Panc1 (cell line): ENCODE measurements at regions of chr15 and their contacts with region 1.

Region 1: GRCh38 chr15:94670438-94671034 is 439.2 kb downstream of the MCTP2 start:
- DNase-seq: peak; percentile 7
- ATAC-seq: no peak
- H3K4me3 ChIP-seq: no peak overlapping the region
- H3K27ac ChIP-seq: no peak overlapping the region
- H3K4me1 ChIP-seq: 0 out of 2 replicates have a peak, but pooled peaks cover 5% of the 10 kb centered on the region
- H3K27me3 ChIP-seq: no peaks in the 10 kb centered on the region
- CTCF ChIP-seq: peak; percentile 73; the same call in 1 of the 2 replicates

Region 2: GRCh38 chr15:94412979-94413746 is 257.4 kb before region 1 on chr15:
- CTCF ChIA-PET with region 1: no interaction called
- POLR2A ChIA-PET with region 1: no interaction called
- in situ Hi-C with region 1: no loop called
- intact Hi-C with region 1: loop called (anchors 10 kb)
- DNase-seq: peak; percentile 10
- ATAC-seq: no peak
- H3K4me3 ChIP-seq: no peak overlapping the region
- H3K27ac ChIP-seq: no peak overlapping the region
- H3K4me1 ChIP-seq: no peaks in the 10 kb centered on the region
- H3K27me3 ChIP-seq: no peaks in the 10 kb centered on the region
- CTCF ChIP-seq: peak; percentile 65; the same call in 1 of the 2 replicates

Region 3: GRCh38 chr15:94785091-94785490 is 114.6 kb after region 1 on chr15:
- CTCF ChIA-PET with region 1: no interaction called
- POLR2A ChIA-PET with region 1: no interaction called
- in situ Hi-C with region 1: no loop called
- intact Hi-C with region 1: no loop called
- DNase-seq: no peak
- ATAC-seq: no peak
- H3K4me3 ChIP-seq: no peak overlapping the region
- H3K27ac ChIP-seq: no peak overlapping the region
- H3K4me1 ChIP-seq: no peaks in the 10 kb centered on the region
- H3K27me3 ChIP-seq: no peaks in the 10 kb centered on the region
- CTCF ChIP-seq: no peak

Region 4: DNA sequence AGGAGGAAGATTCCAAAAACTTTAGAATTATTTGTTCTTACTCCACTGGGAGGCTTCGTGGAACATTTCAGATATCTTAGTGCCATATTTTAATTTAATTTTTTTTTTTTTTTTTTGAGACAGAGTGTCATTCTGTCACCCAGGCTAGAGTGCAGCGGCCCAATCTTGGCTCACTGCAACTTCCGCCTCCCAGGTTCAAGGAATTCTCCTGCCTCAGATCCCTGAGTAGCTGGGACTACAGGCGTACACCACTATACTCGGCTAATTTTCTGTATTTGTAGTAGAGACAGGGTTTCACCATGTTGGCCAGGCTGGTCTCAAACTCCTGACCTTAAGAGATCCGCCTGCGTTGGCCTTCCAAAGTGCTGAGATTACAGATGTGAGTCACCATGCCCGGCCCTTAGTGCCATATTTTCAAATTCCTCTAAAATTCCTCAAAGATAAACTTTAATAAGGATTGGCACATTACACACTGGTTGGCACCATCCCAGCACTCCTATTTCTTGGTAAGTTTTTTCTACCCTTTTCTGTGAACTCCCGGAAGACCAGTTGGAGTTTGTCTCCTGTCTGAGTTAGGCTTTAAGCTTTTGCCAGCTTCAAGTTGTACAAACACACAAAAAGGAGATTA is 254.5 kb after region 1 on chr15:
- CTCF ChIA-PET with region 1: no interaction called
- POLR2A ChIA-PET with region 1: interaction called, 10 read pairs
- in situ Hi-C with region 1: no loop called
- intact Hi-C with region 1: no loop called
- DNase-seq: no peak
- ATAC-seq: no peak
- H3K4me3 ChIP-seq: no peak overlapping the region
- H3K27ac ChIP-seq: no peak overlapping the region
- H3K4me1 ChIP-seq: no peaks in the 10 kb centered on the region
- H3K27me3 ChIP-seq: no peaks in the 10 kb centered on the region
- CTCF ChIP-seq: no peak

Region 5: GRCh38 chr15:95025924-95026728 is 355.6 kb after region 1 on chr15:
- CTCF ChIA-PET with region 1: no interaction called
- POLR2A ChIA-PET with region 1: no interaction called
- in situ Hi-C with region 1: no loop called
- intact Hi-C with region 1: loop called (anchors 10 kb)
- DNase-seq: no peak
- ATAC-seq: peak; percentile 83
- H3K4me3 ChIP-seq: no peak overlapping the region
- H3K27ac ChIP-seq: no peak overlapping the region
- H3K4me1 ChIP-seq: no peaks in the 10 kb centered on the region
- H3K27me3 ChIP-seq: no peaks in the 10 kb centered on the region
- CTCF ChIP-seq: peak; percentile 78